ENCODE measurements at regions of chr1 and their contacts with region 1.

Region 1: DNA sequence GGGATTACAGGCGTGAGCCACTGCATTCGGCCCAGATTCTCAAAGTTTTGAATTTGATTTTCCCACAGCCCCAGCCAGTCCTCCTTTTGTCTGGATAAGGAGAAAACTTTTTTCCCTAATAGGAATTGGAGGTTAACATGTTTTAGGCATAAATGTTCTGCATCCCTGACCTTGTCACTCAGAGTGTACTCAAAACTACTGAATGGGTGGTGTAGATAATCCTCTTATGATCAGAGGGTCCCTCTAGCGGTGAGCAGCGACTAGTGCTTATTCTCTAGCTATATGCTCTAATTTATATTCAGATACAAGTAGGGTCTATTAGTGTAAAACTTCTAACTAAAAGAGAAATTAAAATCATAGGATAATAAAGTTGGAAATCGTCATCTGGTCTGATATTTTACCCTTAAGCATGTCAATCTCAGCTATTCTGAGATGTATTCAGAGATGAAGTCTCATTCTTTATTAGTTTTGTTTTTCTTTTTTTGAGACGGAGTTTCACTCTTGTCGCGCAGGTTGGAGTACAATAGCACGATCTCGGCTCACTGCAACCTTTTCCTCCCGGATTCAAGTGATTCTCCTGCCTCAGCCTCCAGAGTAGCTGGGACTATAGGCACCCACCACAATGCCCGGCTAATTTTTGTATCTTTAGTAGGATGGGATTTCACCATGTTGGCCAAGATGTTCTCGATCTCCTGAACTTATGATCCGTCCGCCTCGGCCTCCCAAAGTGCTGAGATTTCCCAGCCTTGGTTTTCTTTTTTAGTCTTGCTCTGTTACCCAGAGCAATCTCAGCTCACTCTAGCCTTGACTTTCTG is 2.7 kb upstream of the PSMD4 start:
- DNase-seq: peak; percentile 82 to 93 (median 92)
- H3K4me3 ChIP-seq: no peak overlapping the region
- H3K27ac ChIP-seq: no peak overlapping the region
- H3K4me1 ChIP-seq: peaks cover 5 to 12% (median 11%) of the 10 kb centered on the region in 4 experiments
- H3K27me3 ChIP-seq: no peaks in the 10 kb centered on the region

Region 2: GRCh38 chr1:151106894-151107293 is 145.0 kb before region 1 on chr1:
- CTCF ChIA-PET with region 1: no interaction called
- POLR2A ChIA-PET with region 1: no interaction called
- DNase-seq: no peak
- H3K4me3 ChIP-seq: no peak overlapping the region
- H3K27ac ChIP-seq: no peak overlapping the region
- H3K4me1 ChIP-seq: no peaks in the 10 kb centered on the region
- H3K27me3 ChIP-seq: no peaks in the 10 kb centered on the region

Region 3: GRCh38 chr1:151189638-151190445 is 62.0 kb before region 1 on chr1 and contains the start of gene VPS72:
- CTCF ChIA-PET with region 1: interaction called, 52 read pairs
- POLR2A ChIA-PET with region 1: interaction called, 11 read pairs
- DNase-seq: peak; percentile 89 to 95 (median 92)
- H3K4me3 ChIP-seq: peak within 1 kb of the TSS; percentile 66 to 97 (median 91)
- H3K27ac ChIP-seq: peak within 1 kb of the TSS; percentile 85 to 93
- H3K4me1 ChIP-seq: peaks cover 3 to 19% (median 11%) of the 10 kb centered on the region in 4 experiments
- H3K27me3 ChIP-seq: peaks cover 0 to 3% (median 0%) of the 10 kb centered on the region in 5 experiments

Region 4: DNA sequence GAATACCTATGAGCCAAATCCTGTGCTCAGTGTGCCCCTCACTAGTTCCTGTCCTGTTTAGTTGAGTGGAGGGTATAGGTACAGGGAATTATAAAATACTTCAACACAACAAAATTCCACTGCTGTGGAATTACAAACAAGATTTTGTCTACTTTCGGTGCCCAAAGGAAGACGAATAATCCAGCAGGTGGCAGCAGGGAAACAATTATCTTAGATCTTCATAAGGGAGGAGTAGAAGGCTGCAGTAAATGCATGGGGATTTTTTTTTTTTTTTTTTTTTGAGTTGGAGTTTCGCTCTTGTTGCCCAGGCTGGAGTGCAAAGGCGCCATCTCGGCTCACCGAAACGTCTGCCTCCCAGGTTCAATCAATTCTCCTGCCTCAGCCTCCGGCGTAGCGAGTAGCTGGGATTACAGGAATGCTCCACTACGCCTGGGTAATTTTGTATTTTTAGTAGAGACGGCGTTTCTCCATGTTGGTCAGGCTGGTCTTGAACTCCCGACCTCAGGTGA is 55.5 kb before region 1 on chr1:
- CTCF ChIA-PET with region 1: interaction called, 52 read pairs
- POLR2A ChIA-PET with region 1: no interaction called
- DNase-seq: peak; percentile 83 to 86 (median 85)
- H3K4me3 ChIP-seq: peak overlapping the region in 2 of 7 experiments; percentile 11 to 57
- H3K27ac ChIP-seq: no peak overlapping the region
- H3K4me1 ChIP-seq: peaks cover 11 to 27% (median 20%) of the 10 kb centered on the region in 4 experiments
- H3K27me3 ChIP-seq: peaks cover 0 to 3% (median 0%) of the 10 kb centered on the region in 5 experiments

Measured in common myeloid progenitor, CD34-positive (primary cell).